HCT116 (cell line): ENCODE measurements at regions of chr1 and their contacts with region 1.

Region 1: GRCh38 chr1:23403735-23404486 is 20.6 kb downstream of the TCEA3 start:
- DNase-seq: peak; percentile 85
- ATAC-seq: peak; percentile 92
- H3K4me3 ChIP-seq: peak overlapping the region; percentile 27 to 45
- H3K27ac ChIP-seq: peak overlapping the region; percentile 71
- H3K4me1 ChIP-seq: peaks cover 21 to 37% of the 10 kb centered on the region in 2 experiments
- H3K27me3 ChIP-seq: no peaks in the 10 kb centered on the region
- CTCF ChIP-seq: peak; percentile 72 to 96 (median 94)
- POLR2A ChIP-seq: peak; percentile 27
- RAD21 ChIP-seq: peak; percentile 96

Region 2: DNA sequence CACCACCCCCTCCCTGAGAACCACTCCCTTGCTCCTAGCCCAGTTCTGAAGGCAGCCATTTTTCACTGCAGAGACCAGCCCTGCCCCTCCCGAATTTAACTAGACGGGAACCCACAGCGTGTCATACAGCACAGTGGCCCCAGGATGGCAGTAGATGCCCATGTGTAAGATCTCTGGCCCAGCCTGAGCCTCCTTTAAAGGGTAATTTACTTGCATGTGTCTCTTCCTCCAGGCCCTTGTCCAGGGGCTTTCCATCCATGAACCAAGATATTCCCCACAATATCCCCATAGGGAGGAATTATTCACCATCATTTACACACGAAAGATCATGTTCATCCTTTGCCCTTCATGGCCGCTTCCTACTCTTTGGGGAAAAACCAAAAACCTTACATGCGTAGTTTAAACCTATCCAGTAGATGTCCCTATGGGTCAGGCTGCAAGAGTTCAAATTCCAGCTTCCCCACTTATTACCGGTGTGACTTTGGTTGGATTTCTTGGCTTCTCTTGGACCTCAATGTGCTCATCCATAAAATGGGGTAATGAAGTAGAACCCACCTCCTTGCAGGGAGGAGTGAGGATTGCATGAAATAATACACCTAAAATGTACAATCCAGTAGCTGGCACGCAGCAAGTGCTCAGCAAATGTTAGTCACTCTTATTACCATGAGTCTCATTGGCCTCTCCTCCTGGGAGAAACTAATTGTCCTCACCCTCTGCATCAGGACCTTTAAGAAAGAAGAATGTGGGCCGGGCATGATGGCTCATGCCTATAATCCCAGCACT is 427.3 kb before region 1 on chr1:
- CTCF ChIA-PET with region 1: no interaction called
- POLR2A ChIA-PET with region 1: no interaction called
- RAD21 ChIA-PET with region 1: no interaction called
- intact Hi-C with region 1: loop called (anchors 10 kb)
- DNase-seq: peak; percentile 78
- ATAC-seq: peak; percentile 98
- H3K4me3 ChIP-seq: 0 out of 4 replicates have a peak overlapping the region, but pooled peaks of 1 of the 2 experiments have one; percentile 2
- H3K27ac ChIP-seq: no peak overlapping the region
- H3K4me1 ChIP-seq: peaks cover 4 to 22% of the 10 kb centered on the region in 2 experiments; a peak in 2 of 4 replicates
- H3K27me3 ChIP-seq: no peaks in the 10 kb centered on the region
- CTCF ChIP-seq: peak; percentile 90 to 98 (median 95)
- POLR2A ChIP-seq: no peak
- RAD21 ChIP-seq: peak; percentile 96

Region 3: DNA sequence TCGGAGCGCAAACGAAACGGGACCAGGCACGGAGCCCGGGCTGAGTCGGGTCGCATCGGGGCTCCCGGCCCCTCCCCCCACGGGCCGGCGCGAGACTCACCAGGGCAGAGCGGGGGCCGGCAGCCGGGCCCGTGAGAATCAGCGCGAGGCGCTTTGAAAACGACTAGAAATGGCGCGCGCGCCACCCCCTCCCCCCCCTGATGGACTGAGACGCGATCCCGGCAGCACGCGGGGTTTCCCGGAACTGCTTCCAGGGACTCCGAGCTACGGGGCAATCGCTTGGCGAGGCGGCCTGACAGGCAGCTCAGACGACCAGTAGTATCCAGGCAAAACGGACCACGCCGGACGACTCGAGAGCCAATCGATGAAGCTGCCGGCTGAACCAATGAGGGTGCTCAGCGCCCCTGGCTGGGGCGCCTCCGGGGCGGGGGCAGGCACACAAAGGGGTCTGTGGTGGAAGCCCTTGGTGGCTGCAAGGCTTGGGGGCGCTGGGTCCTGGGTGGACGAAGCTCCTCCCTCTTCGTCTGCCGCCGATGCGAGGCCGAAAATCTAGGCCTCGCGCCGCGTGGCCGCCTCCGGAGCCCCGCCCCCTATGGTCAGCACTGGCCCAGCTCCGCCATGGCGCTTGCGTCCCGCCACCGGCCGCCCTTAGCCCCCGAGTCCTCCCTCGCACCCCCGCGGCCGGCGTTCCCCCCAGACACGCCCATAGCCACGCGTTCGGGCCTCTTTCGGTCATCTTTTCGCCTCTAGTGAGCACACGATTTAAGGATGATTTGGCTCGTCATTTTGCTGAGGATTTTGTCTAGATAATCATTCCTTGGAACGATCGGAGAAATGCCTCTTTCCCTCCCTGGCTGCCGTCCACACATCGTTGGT is 59.6 kb before region 1 on chr1 and contains the start of gene HNRNPR:
- CTCF ChIA-PET with region 1: interaction called, 12 read pairs
- POLR2A ChIA-PET with region 1: interaction called, 19 read pairs
- RAD21 ChIA-PET with region 1: interaction called, 10 to 15 read pairs
- intact Hi-C with region 1: loop called (anchors 2 kb)
- DNase-seq: peak; percentile 100
- ATAC-seq: peak; percentile 96
- H3K4me3 ChIP-seq: peak within 1 kb of the TSS; percentile 71 to 76
- H3K27ac ChIP-seq: peak within 1 kb of the TSS; percentile 85
- H3K4me1 ChIP-seq: peaks cover 11 to 37% of the 10 kb centered on the region in 2 experiments
- H3K27me3 ChIP-seq: no peaks in the 10 kb centered on the region
- CTCF ChIP-seq: no peak
- POLR2A ChIP-seq: peak; percentile 63
- RAD21 ChIP-seq: no peak
- total RNA-seq, gene HNRNPR: 194 TPM

Region 4: GRCh38 chr1:23367791-23368561 is 35.9 kb before region 1 on chr1:
- CTCF ChIA-PET with region 1: interaction called, 21 read pairs
- POLR2A ChIA-PET with region 1: interaction called, 7 read pairs
- RAD21 ChIA-PET with region 1: interaction called in 1 of 2 experiments, 6 read pairs
- intact Hi-C with region 1: loop called (anchors 2 kb)
- DNase-seq: peak; percentile 98
- ATAC-seq: peak; percentile 90
- H3K4me3 ChIP-seq: peak overlapping the region; percentile 65 to 69
- H3K27ac ChIP-seq: peak overlapping the region; percentile 90
- H3K4me1 ChIP-seq: peaks cover 23 to 33% of the 10 kb centered on the region in 2 experiments
- H3K27me3 ChIP-seq: no peaks in the 10 kb centered on the region
- CTCF ChIP-seq: no peak
- POLR2A ChIP-seq: no peak
- RAD21 ChIP-seq: no peak

Region 5: DNA sequence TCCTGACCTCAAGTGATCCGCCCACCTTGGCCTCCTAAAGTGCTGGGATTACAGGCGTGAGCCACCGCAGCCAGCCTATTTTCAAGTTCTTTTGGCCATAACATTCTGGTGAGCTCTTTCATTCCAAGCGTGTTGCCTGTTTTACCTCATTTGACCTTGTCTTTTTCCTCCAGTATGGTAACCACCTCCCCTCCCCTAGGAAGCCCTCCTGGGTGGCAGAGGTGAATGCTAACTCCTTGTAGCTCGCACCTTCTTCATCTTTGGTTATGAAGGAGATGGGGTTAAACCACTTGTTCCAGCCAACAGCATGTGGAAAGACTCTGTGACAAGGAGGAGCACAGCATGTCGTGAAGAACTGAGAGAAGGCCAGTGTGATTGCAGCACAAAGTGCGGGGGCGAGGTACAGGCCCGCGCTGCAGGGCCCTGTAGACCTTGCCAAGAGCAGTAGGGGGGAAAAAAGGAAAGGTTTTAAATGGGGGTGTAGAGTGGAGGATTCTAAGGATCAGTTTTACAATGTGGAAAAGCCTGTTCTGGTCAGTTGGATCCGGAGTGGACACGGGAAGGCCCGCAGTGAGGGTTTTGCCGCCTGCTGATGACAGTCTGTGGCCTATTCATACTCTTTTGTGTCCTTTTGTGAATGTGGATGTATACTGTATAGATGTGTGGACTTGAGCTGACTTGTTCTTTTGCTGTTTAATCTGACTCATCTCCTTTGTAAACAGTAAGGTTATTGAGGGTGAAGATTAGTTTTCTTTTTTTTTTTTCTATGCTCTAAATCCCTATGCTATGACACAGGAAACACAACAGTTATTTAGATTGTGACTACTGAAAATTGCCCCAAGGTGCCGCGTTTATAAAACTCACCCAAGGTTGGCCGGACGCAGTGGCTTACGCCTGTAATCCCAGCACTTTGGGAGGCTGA is 26.8 kb before region 1 on chr1:
- CTCF ChIA-PET with region 1: interaction called, 10 read pairs
- POLR2A ChIA-PET with region 1: interaction called, 14 read pairs
- RAD21 ChIA-PET with region 1: no interaction called
- intact Hi-C with region 1: no loop called
- DNase-seq: peak; percentile 54
- ATAC-seq: peak; percentile 75
- H3K4me3 ChIP-seq: peak overlapping the region in 1 of 2 experiments; percentile 14; a peak in 1 of 4 replicates
- H3K27ac ChIP-seq: peak overlapping the region; percentile 81
- H3K4me1 ChIP-seq: peaks cover 27 to 28% of the 10 kb centered on the region in 2 experiments
- H3K27me3 ChIP-seq: no peaks in the 10 kb centered on the region
- CTCF ChIP-seq: no peak
- POLR2A ChIP-seq: no peak
- RAD21 ChIP-seq: peak; percentile 17; the same call in 1 of the 2 replicates

Region 6: DNA sequence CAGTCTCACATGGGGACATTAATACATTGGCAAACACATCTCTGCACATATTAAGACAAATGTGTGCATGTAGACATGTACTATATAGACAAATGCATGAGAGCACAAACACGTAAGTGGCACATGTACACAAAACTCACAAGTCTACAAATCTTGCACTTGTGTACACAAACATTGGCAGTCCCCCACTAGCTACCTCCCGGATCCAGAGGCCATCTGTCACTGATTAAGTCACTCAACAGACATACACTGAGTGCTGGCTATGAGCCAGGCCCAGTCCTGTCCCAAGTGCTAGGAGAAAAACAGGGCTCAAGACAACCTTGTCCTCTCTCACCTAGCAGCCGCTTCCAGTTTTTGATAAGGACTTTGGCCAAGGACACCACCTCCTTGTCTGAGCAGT is 13.7 kb after region 1 on chr1:
- CTCF ChIA-PET with region 1: interaction called, 10 read pairs
- POLR2A ChIA-PET with region 1: interaction called, 3 read pairs
- RAD21 ChIA-PET with region 1: no interaction called
- intact Hi-C with region 1: no loop called
- DNase-seq: no peak
- ATAC-seq: no peak
- H3K4me3 ChIP-seq: no peak overlapping the region
- H3K27ac ChIP-seq: no peak overlapping the region
- H3K4me1 ChIP-seq: no peaks in the 10 kb centered on the region
- H3K27me3 ChIP-seq: no peaks in the 10 kb centered on the region
- CTCF ChIP-seq: no peak
- POLR2A ChIP-seq: no peak
- RAD21 ChIP-seq: no peak